T-cell (primary cell): ENCODE measurements at regions of chr6 and their contacts with region 1.

Region 1: GRCh38 chr6:150891888-150892485 is 26.5 kb downstream of the MTHFD1L start:
- DNase-seq: peak in 34 of 35 experiments; percentile 5 to 74 (median 44)
- ATAC-seq: peak; percentile 51 to 69 (median 66)
- H3K4me3 ChIP-seq: no peak overlapping the region
- H3K4me3 Mint-ChIP-seq: no peak overlapping the region
- H3K27ac ChIP-seq: no peak overlapping the region
- H3K27ac Mint-ChIP-seq: no peak overlapping the region
- H3K4me1 ChIP-seq: peaks cover 12 to 13% of the 10 kb centered on the region in 2 experiments
- H3K4me1 Mint-ChIP-seq: peaks cover 17 to 30% (median 24%) of the 10 kb centered on the region in 3 donors
- H3K27me3 ChIP-seq: no peaks in the 10 kb centered on the region
- H3K27me3 Mint-ChIP-seq: no peaks in the 10 kb centered on the region

Region 2: DNA sequence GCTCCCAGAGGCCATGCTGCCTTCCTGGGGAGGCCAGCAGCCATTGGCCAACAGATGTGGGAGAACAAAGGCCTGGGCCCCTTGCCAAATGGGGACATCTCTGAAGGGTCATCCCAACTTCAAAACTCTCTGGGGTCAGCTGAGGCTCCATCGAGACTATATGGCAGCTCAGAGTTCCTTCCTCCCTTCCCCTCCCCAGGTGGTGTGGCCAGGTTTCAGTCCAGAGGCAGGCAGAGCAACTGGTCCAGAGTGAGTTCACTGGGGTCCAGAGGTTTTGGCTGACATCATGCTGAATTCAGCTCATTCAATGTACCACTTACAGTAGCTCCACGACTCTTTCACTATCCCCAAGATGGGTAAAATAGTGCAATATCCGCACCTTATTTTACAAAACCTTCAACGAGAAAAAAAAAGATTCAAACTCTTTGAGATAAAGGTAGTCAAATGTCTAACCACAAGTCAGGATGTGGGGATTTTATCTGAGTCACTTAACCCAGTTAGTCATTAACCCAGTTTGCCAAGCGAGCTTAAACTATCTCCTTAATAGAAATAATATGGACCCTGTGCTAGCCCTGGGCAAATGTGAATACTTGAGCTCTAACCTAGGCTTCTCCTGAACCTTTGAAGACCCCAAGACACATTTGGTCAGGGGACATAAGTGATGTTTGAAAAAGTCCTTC is 400.7 kb before region 1 on chr6:
- CTCF ChIA-PET with region 1: no interaction called
- POLR2A ChIA-PET with region 1: no interaction called
- DNase-seq: peak in 1 of 35 experiments; percentile 54
- ATAC-seq: peak in 3 of 4 experiments; percentile 55 to 83 (median 63)
- H3K4me3 ChIP-seq: no peak overlapping the region
- H3K4me3 Mint-ChIP-seq: peak overlapping the region in 1 of 3 donors; percentile 42
- H3K27ac ChIP-seq: peak overlapping the region; percentile 54
- H3K27ac Mint-ChIP-seq: peak overlapping the region; percentile 29 to 75
- H3K4me1 ChIP-seq: peaks cover 3 to 16% of the 10 kb centered on the region in 2 experiments
- H3K4me1 Mint-ChIP-seq: peaks cover 0 to 22% (median 17%) of the 10 kb centered on the region in 3 donors
- H3K27me3 ChIP-seq: no peaks in the 10 kb centered on the region
- H3K27me3 Mint-ChIP-seq: peaks cover 3 to 12% of the 10 kb centered on the region in 2 donors

Region 3: GRCh38 chr6:151240036-151240685 is 348.2 kb after region 1 on chr6:
- CTCF ChIA-PET with region 1: no interaction called
- POLR2A ChIA-PET with region 1: interaction called in 1 of 2 experiments, 11 read pairs
- DNase-seq: peak in 4 of 35 experiments; percentile 0 to 8 (median 5)
- ATAC-seq: peak in 2 of 4 experiments; percentile 38 to 39
- H3K4me3 ChIP-seq: peak overlapping the region in 1 of 2 donors; percentile 38
- H3K4me3 Mint-ChIP-seq: peak overlapping the region; percentile 65 to 72 (median 70)
- H3K27ac ChIP-seq: no peak overlapping the region
- H3K27ac Mint-ChIP-seq: no peak overlapping the region
- H3K4me1 ChIP-seq: peaks cover 0 to 17% of the 10 kb centered on the region in 2 experiments
- H3K4me1 Mint-ChIP-seq: peaks cover 0 to 18% (median 14%) of the 10 kb centered on the region in 3 donors
- H3K27me3 ChIP-seq: peaks cover 13 to 38% of the 10 kb centered on the region in 2 experiments
- H3K27me3 Mint-ChIP-seq: peaks cover 60 to 63% of the 10 kb centered on the region in 2 donors

Region 4: GRCh38 chr6:151323791-151324487 is 432.0 kb after region 1 on chr6:
- CTCF ChIA-PET with region 1: interaction called, 83 to 149 read pairs
- POLR2A ChIA-PET with region 1: interaction called in 1 of 2 experiments, 6 read pairs
- DNase-seq: peak; percentile 24 to 82 (median 64)
- ATAC-seq: peak; percentile 65 to 81 (median 80)
- H3K4me3 ChIP-seq: no peak overlapping the region
- H3K4me3 Mint-ChIP-seq: peak overlapping the region in 2 of 3 donors; percentile 28 to 81
- H3K27ac ChIP-seq: no peak overlapping the region
- H3K27ac Mint-ChIP-seq: no peak overlapping the region
- H3K4me1 ChIP-seq: peaks cover 2 to 19% of the 10 kb centered on the region in 2 experiments
- H3K4me1 Mint-ChIP-seq: peaks cover 19 to 28% (median 25%) of the 10 kb centered on the region in 3 donors
- H3K27me3 ChIP-seq: peaks cover 2 to 39% of the 10 kb centered on the region in 2 experiments
- H3K27me3 Mint-ChIP-seq: peaks cover 46 to 56% of the 10 kb centered on the region in 2 donors

Region 5: DNA sequence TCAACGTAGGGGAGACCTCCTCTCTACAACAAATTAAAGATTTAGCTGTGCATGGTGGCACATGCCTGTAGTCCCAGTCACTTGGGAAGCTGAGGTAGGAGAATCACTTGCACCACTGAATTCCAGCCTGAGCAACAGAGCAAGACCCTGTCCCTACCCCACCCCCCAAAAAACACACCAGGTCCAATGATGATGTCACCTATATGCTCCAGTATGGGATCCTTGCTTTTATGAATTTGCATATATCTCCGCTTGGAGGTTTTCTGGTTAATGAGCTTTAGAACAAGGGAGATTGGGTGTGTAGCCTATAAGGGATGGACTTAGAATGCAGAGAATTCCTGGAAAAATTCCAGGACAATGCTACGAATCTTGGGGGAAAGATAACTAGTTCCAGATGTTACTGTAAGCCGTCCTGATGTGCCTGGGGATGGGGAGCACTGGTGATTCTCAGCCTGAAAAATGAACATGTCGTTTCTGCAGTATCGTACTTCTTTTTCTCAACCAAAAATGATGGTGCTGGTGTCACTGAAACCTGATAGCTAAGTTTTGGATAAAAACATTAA is 438.2 kb after region 1 on chr6:
- CTCF ChIA-PET with region 1: interaction called, 83 to 149 read pairs
- POLR2A ChIA-PET with region 1: interaction called in 1 of 2 experiments, 6 read pairs
- DNase-seq: no peak
- ATAC-seq: no peak
- H3K4me3 ChIP-seq: no peak overlapping the region
- H3K4me3 Mint-ChIP-seq: no peak overlapping the region
- H3K27ac ChIP-seq: no peak overlapping the region
- H3K27ac Mint-ChIP-seq: no peak overlapping the region
- H3K4me1 ChIP-seq: peaks cover under 1 to 12% of the 10 kb centered on the region in 2 experiments
- H3K4me1 Mint-ChIP-seq: peaks cover 9 to 12% (median 11%) of the 10 kb centered on the region in 3 donors
- H3K27me3 ChIP-seq: peaks cover 2 to 18% of the 10 kb centered on the region in 2 experiments
- H3K27me3 Mint-ChIP-seq: peaks cover 32 to 33% of the 10 kb centered on the region in 2 donors

Region 6: GRCh38 chr6:151335930-151336329 is 443.9 kb after region 1 on chr6:
- CTCF ChIA-PET with region 1: interaction called, 14 to 26 read pairs
- POLR2A ChIA-PET with region 1: no interaction called
- DNase-seq: no peak
- ATAC-seq: no peak
- H3K4me3 ChIP-seq: no peak overlapping the region
- H3K4me3 Mint-ChIP-seq: no peak overlapping the region
- H3K27ac ChIP-seq: no peak overlapping the region
- H3K27ac Mint-ChIP-seq: no peak overlapping the region
- H3K4me1 ChIP-seq: peaks cover 0 to 3% of the 10 kb centered on the region in 2 experiments
- H3K4me1 Mint-ChIP-seq: peaks cover 0 to 3% (median 3%) of the 10 kb centered on the region in 3 donors
- H3K27me3 ChIP-seq: peaks cover 0 to 5% of the 10 kb centered on the region in 2 experiments
- H3K27me3 Mint-ChIP-seq: peaks cover 1 to 5% of the 10 kb centered on the region in 2 donors

Region 7: GRCh38 chr6:151551223-151551857 is 659.4 kb after region 1 on chr6:
- CTCF ChIA-PET with region 1: interaction called in 1 of 2 experiments, 10 read pairs
- POLR2A ChIA-PET with region 1: no interaction called
- DNase-seq: no peak
- ATAC-seq: no peak
- H3K4me3 ChIP-seq: no peak overlapping the region
- H3K4me3 Mint-ChIP-seq: no peak overlapping the region
- H3K27ac ChIP-seq: no peak overlapping the region
- H3K27ac Mint-ChIP-seq: no peak overlapping the region
- H3K4me1 ChIP-seq: no peaks in the 10 kb centered on the region
- H3K4me1 Mint-ChIP-seq: no peaks in the 10 kb centered on the region
- H3K27me3 ChIP-seq: peaks cover 0 to 4% of the 10 kb centered on the region in 2 experiments
- H3K27me3 Mint-ChIP-seq: peaks cover 4 to 5% of the 10 kb centered on the region in 2 donors